ENCODE measurements at regions of chr19 and their contacts with region 1.

Region 1: DNA sequence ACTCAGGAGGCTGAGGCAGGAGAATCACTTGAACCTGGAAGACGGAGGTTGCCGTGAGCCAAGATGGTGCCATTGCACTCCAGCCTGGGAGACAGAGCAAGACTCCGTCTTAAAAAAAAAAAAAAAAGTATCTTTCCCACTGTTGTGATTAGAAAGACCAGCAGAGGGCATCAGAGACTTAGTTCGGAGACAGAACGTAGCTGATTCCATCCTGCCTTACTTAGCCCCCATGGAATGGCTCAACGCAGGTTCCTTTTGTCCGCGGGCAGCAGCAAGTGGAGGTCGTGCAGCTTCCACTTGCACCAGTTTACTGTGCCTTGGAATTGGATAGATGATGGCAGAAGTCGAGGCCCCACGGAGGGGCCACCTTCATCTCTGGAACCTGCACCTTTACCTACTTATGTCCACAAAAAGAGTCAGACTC is 8.1 kb downstream of the TIMM29 start:
- DNase-seq: peak; percentile 64
- H3K4me3 ChIP-seq: no peak overlapping the region
- H3K27ac ChIP-seq: peak overlapping the region; percentile 3 to 47
- H3K4me1 ChIP-seq: no peaks in the 10 kb centered on the region
- H3K27me3 ChIP-seq: no peaks in the 10 kb centered on the region
- CTCF ChIP-seq: peak; percentile 12 to 83 (median 55)
- POLR2A ChIP-seq: no peak

Region 2: GRCh38 chr19:10615429-10616023 is 321.1 kb before region 1 on chr19:
- intact Hi-C with region 1: no loop called
- DNase-seq: no peak
- H3K4me3 ChIP-seq: no peak overlapping the region
- H3K27ac ChIP-seq: no peak overlapping the region
- H3K4me1 ChIP-seq: no peaks in the 10 kb centered on the region
- H3K27me3 ChIP-seq: no peaks in the 10 kb centered on the region
- CTCF ChIP-seq: no peak
- POLR2A ChIP-seq: no peak

Region 3: GRCh38 chr19:11025445-11025844 is 88.8 kb after region 1 on chr19:
- intact Hi-C with region 1: loop called (anchors 5 kb)
- DNase-seq: no peak
- H3K4me3 ChIP-seq: no peak overlapping the region
- H3K27ac ChIP-seq: no peak overlapping the region
- H3K4me1 ChIP-seq: no peaks in the 10 kb centered on the region
- H3K27me3 ChIP-seq: no peaks in the 10 kb centered on the region
- CTCF ChIP-seq: no peak
- POLR2A ChIP-seq: no peak

Region 4: DNA sequence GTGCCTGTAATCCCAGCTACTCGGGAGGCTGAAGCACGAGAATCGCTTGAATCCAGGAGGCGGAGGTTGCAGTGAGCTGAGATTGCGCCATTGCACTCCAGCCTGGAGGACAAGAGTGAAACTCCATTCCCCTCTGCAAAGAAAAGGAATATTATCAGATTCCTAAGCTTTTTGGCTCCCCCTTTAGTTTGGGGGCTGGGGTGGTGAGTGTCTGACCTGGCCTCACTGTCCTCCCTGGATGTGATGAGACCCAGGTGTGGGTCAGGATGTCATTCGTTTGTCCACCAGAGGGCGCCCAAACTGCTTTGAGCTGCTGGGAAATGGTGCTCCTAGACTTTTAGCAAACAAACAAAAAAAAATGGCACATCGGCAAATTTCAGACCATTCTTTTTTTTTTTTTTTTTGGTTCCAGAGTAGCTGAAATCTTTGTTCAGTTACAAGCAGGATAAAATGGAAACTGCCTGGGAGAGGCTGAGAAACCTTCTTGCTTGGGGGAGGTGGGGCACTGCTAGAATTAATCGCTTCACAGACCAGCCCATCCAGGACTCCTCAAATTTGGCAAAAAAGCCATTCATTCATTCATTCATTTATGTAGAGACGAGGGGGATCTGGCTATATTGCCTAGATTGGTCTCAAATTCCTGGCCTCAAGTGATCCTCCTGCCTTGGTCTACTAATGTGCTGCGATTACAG is 189.5 kb after region 1 on chr19:
- intact Hi-C with region 1: loop called (anchors 10 kb)
- DNase-seq: peak; percentile 68
- H3K4me3 ChIP-seq: no peak overlapping the region
- H3K27ac ChIP-seq: no peak overlapping the region
- H3K4me1 ChIP-seq: no peaks in the 10 kb centered on the region
- H3K27me3 ChIP-seq: no peaks in the 10 kb centered on the region
- CTCF ChIP-seq: peak; percentile 72 to 74 (median 73)
- POLR2A ChIP-seq: no peak

Region 5: DNA sequence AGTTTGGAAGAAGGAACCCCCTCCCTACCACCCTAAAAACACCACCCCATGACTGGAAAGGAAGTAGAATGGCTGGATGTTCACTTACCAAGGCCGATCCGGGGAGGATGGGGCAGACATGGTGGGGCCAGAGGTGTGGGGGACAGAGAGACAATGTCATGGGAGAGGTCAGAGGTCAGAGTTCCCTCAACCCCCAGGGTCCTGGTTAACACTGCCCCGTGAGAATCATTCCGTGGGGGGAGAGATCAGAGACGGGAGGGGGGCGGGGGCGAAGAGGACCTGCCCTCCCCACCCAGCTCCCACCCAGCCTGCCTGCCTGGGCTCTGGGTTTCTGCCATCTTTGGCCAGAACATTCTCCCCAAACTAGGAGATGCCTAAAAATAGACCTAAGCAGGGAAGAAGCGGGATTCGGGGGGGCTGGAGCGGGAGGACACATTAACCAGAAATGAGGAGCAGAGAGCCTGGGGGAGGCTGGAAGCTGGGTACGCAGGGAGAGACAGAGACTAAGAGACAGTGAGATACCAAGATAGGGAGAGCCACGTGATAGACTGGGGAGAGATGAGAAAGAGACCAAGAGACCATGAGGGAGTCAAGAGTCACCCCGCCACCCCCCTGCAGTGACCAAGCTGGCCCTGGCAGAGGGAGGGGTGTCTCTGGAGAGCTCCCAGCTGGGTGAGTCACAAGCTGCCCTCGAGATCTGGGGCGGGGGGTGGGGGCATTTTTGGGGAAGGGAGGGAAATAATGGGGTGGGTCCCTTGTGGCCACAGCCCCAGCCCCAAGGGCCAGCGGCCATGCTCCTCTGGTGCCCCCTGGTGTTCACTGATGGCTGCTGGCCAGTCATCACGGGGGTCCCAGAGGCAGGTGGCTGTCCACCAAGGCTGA is 266.8 kb after region 1 on chr19:
- intact Hi-C with region 1: loop called (anchors 5 kb)
- DNase-seq: peak; percentile 34
- H3K4me3 ChIP-seq: no peak overlapping the region
- H3K27ac ChIP-seq: peak overlapping the region; percentile 74 to 85
- H3K4me1 ChIP-seq: no peaks in the 10 kb centered on the region
- H3K27me3 ChIP-seq: no peaks in the 10 kb centered on the region
- CTCF ChIP-seq: peak; percentile 79 to 94 (median 82)
- POLR2A ChIP-seq: no peak